ENCODE measurements at regions of chrX and their contacts with region 1.

Region 1: DNA sequence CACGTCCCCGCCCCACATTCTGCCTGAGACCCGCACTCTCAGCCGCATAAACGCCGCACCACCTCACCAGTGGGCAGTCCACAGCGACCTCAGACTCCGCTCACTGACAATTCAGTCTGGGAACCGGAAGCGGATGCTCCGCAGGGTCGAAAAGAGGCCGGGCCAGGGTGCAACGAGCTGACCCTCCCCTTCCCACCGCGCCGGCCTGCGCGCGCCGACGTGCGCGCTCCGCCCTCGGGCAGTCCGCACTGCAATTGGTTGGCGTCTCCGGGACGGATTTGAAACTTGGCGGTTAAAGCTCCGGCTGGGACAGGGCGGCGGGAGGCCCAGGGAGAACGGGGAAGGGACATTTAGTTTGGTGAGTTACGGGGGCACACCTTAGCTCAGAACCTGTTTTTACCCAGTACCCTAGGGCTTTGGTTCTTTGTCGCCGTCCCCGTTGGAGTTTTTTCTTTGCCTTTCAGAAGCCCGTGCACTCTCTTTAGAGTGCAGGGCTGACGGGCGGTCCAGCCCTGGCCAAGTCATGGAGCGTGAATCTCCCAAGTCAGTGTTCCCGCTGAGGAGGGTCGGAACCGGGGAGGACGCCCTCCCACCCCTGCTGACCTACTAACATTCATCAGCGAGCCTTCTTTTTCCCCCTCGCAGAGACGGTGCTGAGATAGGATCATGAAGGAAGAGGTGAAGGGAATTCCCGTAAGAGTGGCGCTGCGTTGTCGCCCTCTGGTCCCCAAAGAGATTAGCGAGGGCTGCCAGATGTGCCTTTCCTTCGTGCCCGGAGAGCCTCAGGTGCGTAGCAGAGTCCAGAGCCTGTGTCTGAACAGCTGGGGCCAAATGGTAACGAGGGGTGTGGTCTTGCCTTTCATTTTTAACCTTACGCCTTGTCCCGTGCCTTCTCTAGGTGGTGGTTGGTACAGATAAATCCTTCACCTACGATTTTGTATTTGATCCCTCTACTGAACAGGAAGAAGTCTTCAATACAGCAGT is at the starts of genes KIF4A and PDZD11:
- DNase-seq: peak; percentile 75
- ATAC-seq: peak; percentile 99
- H3K4me3 ChIP-seq: peak within 1 kb of the TSS; percentile 45 to 75 (median 57)
- H3K4me3 Mint-ChIP-seq: peak within 1 kb of the TSS; percentile 89
- H3K27ac ChIP-seq: peak within 1 kb of the TSS; percentile 33 to 53
- H3K27ac Mint-ChIP-seq: peak within 1 kb of the TSS; percentile 78
- H3K4me1 ChIP-seq: peaks cover 10 to 13% of the 10 kb centered on the region in 2 donors
- H3K4me1 Mint-ChIP-seq: peaks cover 20% of the 10 kb centered on the region
- H3K27me3 ChIP-seq: no peaks in the 10 kb centered on the region
- H3K27me3 Mint-ChIP-seq: no peaks in the 10 kb centered on the region
- CTCF ChIP-seq: no peak
- total RNA-seq, gene KIF4A: 0.07 and 0.22 TPM in 2 replicates
- total RNA-seq, gene PDZD11: 12.0 and 13.8 TPM in 2 replicates

Region 2: DNA sequence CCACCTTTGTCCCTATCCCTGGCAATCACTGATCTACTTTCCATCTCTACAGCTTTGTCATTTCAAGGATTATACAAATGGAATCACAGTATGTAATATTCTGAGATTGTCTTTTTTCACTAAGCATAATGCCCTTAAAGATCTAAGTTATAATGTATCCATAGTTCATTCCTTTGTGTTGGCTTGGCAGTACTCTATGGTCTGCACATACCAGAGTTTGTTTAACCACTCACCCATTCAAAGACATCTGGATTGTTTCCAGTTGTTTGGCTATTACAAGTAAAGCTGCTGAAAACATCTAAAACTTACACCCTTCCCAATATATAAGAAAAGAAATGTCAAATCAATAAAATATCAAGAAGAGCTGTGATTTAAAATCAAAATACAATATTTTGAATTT is 81.6 kb before region 1 on chrX:
- CTCF ChIA-PET with region 1: no interaction called
- POLR2A ChIA-PET with region 1: no interaction called
- intact Hi-C with region 1: no loop called
- DNase-seq: no peak
- ATAC-seq: no peak
- H3K4me3 ChIP-seq: no peak overlapping the region
- H3K4me3 Mint-ChIP-seq: no peak overlapping the region
- H3K27ac ChIP-seq: no peak overlapping the region
- H3K27ac Mint-ChIP-seq: no peak overlapping the region
- H3K4me1 ChIP-seq: no peaks in the 10 kb centered on the region
- H3K4me1 Mint-ChIP-seq: no peaks in the 10 kb centered on the region
- H3K27me3 ChIP-seq: no peaks in the 10 kb centered on the region
- H3K27me3 Mint-ChIP-seq: peaks cover 6% of the 10 kb centered on the region
- CTCF ChIP-seq: no peak

Region 3: DNA sequence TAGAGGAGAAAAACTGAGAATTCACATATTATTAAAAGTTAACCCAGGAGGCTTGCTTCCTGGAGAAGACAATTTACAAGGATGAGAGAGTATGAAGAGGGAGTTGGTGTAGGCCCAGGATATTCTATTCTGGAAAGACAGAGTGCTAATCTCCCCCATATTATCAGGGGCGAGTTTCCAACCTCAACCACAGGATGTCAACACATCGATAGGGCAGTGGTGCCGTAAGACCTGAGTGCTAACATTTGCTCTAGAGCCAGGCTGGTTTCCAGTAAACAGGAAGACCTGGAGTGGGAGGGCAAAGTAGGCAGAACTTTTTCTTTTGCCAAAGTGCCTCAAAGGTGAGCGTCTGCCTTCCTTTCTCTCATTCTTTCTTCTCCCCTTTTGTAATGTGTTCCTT is 58.4 kb before region 1 on chrX:
- CTCF ChIA-PET with region 1: no interaction called
- POLR2A ChIA-PET with region 1: no interaction called
- intact Hi-C with region 1: no loop called
- DNase-seq: no peak
- ATAC-seq: no peak
- H3K4me3 ChIP-seq: no peak overlapping the region
- H3K4me3 Mint-ChIP-seq: no peak overlapping the region
- H3K27ac ChIP-seq: no peak overlapping the region
- H3K27ac Mint-ChIP-seq: no peak overlapping the region
- H3K4me1 ChIP-seq: no peaks in the 10 kb centered on the region
- H3K4me1 Mint-ChIP-seq: no peaks in the 10 kb centered on the region
- H3K27me3 ChIP-seq: no peaks in the 10 kb centered on the region
- H3K27me3 Mint-ChIP-seq: peaks cover under 1% of the 10 kb centered on the region
- CTCF ChIP-seq: no peak

Region 4: GRCh38 chrX:70336767-70337166 is 46.7 kb after region 1 on chrX:
- CTCF ChIA-PET with region 1: no interaction called
- POLR2A ChIA-PET with region 1: no interaction called
- intact Hi-C with region 1: no loop called
- DNase-seq: peak; percentile 1
- ATAC-seq: peak; percentile 24
- H3K4me3 ChIP-seq: no peak overlapping the region
- H3K4me3 Mint-ChIP-seq: no peak overlapping the region
- H3K27ac ChIP-seq: no peak overlapping the region
- H3K27ac Mint-ChIP-seq: no peak overlapping the region
- H3K4me1 ChIP-seq: peaks cover 0 to 3% of the 10 kb centered on the region in 2 donors
- H3K4me1 Mint-ChIP-seq: peaks cover 5% of the 10 kb centered on the region
- H3K27me3 ChIP-seq: no peaks in the 10 kb centered on the region
- H3K27me3 Mint-ChIP-seq: no peaks in the 10 kb centered on the region
- CTCF ChIP-seq: no peak

Region 5: DNA sequence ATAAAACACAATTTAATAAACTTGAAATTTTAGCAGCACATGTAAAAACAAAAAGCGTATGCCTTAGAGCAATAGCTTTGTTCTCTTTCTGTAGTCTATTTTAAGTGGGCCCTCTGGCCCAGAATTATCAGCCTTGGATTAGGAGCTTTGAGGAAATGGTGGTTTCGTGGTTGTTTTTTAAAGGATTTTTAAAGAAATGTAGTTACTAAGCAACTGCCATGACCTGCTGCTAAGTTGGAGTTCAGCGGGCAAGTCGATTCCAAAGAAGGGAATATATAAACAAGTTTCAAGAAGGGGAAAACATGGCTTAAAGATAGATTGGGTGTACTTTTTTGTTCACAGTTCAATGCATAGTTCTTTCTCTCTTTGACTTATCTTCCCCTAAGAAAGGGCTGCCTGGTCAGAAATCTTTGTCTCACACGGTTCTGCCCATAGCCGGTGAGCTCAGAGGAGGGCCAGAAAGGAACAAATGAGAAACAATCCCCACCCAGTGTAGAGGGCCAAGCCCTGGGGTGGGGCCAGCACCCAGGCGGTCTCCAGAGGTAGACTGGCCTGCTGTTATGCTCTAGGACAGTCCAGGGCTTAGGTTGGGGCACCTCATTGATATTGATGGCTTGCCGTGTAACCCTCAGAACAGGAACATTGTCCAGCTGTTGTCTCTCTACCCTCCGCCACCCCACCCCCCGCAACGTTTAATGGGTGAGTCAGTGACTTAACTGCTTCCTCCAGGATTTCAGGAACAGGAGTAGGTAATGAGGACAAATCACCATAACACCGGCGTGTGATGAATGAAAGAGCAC is 187.0 kb after region 1 on chrX:
- CTCF ChIA-PET with region 1: no interaction called
- POLR2A ChIA-PET with region 1: interaction called, 12 read pairs
- intact Hi-C with region 1: no loop called
- DNase-seq: no peak
- ATAC-seq: no peak
- H3K4me3 ChIP-seq: no peak overlapping the region
- H3K4me3 Mint-ChIP-seq: no peak overlapping the region
- H3K27ac ChIP-seq: no peak overlapping the region
- H3K27ac Mint-ChIP-seq: no peak overlapping the region
- H3K4me1 ChIP-seq: no peaks in the 10 kb centered on the region
- H3K4me1 Mint-ChIP-seq: peaks cover 3% of the 10 kb centered on the region
- H3K27me3 ChIP-seq: no peaks in the 10 kb centered on the region
- H3K27me3 Mint-ChIP-seq: no peaks in the 10 kb centered on the region
- CTCF ChIP-seq: no peak